MCF 10A (cell line): ENCODE measurements at regions of chr10 and their contacts with region 1.

Region 1: GRCh38 chr10:59625721-59626522 is 83.7 kb downstream of the SLC16A9 start:
- DNase-seq: peak; percentile 66
- H3K4me3 Mint-ChIP-seq: no peak overlapping the region
- H3K27ac Mint-ChIP-seq: no peak overlapping the region
- H3K4me1 Mint-ChIP-seq: peaks cover 5% of the 10 kb centered on the region
- H3K27me3 Mint-ChIP-seq: peaks cover 4% of the 10 kb centered on the region
- CTCF ChIP-seq: peak; percentile 81

Region 2: DNA sequence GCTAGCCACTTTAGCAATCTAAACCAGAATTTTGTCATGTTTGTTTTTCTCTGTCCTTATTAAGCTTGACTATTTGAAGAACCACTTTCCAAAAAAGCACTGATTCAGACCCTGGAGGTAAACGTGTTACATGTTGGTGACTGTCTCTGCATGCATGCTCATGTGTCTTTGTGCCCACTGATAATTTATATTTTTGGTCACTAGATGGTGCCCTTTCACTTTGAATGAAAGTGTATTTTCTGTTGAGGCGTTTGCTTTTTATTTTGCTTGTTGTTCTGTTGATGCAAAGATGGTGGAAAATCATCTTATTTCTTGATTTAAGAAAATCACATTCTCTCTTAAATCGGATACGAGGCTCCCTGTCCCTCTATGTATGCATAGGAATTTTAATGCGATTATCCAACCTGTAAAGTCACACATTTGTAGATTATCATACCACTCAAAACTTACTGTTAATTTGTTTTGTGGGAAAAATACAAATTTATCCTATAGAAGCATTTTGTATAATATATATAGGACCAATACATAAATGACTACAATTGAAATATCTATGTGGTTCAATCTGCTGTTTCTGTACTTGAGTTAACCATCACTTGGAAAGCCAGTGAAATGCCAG is 843.9 kb before region 1 on chr10:
- CTCF ChIA-PET with region 1: interaction called, 15 read pairs
- POLR2A ChIA-PET with region 1: no interaction called
- intact Hi-C with region 1: no loop called
- DNase-seq: peak; percentile 59
- H3K4me3 Mint-ChIP-seq: no peak overlapping the region
- H3K27ac Mint-ChIP-seq: no peak overlapping the region
- H3K4me1 Mint-ChIP-seq: peaks cover 22% of the 10 kb centered on the region
- H3K27me3 Mint-ChIP-seq: no peaks in the 10 kb centered on the region
- CTCF ChIP-seq: peak; percentile 52

Region 3: DNA sequence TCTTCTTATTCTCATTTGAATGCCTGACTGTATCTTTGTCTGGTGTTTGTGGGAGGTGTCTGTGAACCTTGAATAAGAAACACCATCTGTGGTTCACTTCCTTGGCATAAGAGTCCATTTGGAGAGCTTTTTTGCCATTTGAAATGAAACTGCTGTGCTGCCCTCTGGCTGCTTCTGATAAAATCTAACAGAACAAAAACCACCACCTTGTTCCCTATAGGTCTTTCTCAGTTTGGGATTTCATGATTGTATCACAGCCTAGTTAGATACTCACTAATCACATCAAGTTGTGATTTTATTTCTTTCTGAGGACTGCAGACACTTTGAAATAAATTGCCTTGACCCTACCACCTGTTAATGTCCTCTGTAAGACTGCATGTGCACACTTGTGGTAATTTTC is 160.8 kb before region 1 on chr10:
- CTCF ChIA-PET with region 1: interaction called, 10 read pairs
- POLR2A ChIA-PET with region 1: no interaction called
- intact Hi-C with region 1: no loop called
- DNase-seq: peak; percentile 36
- H3K4me3 Mint-ChIP-seq: no peak overlapping the region
- H3K27ac Mint-ChIP-seq: no peak overlapping the region
- H3K4me1 Mint-ChIP-seq: no peaks in the 10 kb centered on the region
- H3K27me3 Mint-ChIP-seq: peaks cover 28% of the 10 kb centered on the region
- CTCF ChIP-seq: no peak

Region 4: DNA sequence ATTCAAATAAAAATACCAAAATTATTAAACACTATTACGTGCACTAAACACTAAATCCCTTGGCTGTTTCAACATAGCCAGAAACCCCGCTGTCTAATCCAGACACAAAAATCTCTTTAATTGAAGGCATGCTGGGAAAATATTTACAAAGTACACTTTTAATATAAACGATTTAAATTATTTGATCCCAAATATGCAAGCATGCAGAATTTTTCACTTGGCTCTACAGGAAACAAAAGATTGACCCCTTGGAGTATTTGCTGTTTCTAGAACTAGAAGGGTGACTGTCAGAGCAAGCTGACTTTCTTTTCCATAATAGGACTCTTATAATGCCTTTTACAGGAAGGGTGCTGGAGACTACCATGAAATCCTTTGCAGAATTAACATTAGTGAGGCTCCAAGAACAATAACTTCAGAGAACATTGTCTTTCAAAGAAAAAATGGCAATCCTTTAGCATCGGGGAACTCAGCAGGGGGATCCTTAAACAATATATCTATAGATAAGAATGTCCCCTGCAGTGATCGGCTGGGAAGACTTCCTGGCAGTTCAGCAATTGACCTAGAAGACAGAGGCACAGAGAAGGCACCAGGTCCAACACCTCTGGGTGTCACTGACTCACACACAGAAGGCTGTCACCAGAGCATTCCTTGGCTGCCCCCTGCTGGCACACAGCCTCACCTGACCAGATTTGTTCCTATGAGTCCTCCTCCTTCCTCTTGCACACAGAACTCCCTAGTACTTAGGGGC is 183.1 kb after region 1 on chr10:
- CTCF ChIA-PET with region 1: interaction called, 67 read pairs
- POLR2A ChIA-PET with region 1: interaction called, 4 read pairs
- intact Hi-C with region 1: loop called (anchors 1 kb)
- DNase-seq: peak; percentile 81
- H3K4me3 Mint-ChIP-seq: no peak overlapping the region
- H3K27ac Mint-ChIP-seq: no peak overlapping the region
- H3K4me1 Mint-ChIP-seq: no peaks in the 10 kb centered on the region
- H3K27me3 Mint-ChIP-seq: no peaks in the 10 kb centered on the region
- CTCF ChIP-seq: peak; percentile 63

Region 5: GRCh38 chr10:59906417-59907202 is 280.7 kb after region 1 on chr10 and contains the start of gene CCDC6:
- CTCF ChIA-PET with region 1: interaction called, 28 read pairs
- POLR2A ChIA-PET with region 1: interaction called, 9 read pairs
- intact Hi-C with region 1: loop called (anchors 1 kb)
- DNase-seq: peak; percentile 92
- H3K4me3 Mint-ChIP-seq: peak within 1 kb of the TSS; percentile 87
- H3K27ac Mint-ChIP-seq: peak within 1 kb of the TSS; percentile 86
- H3K4me1 Mint-ChIP-seq: peaks cover 47% of the 10 kb centered on the region
- H3K27me3 Mint-ChIP-seq: no peaks in the 10 kb centered on the region
- CTCF ChIP-seq: peak; percentile 50
- total RNA-seq, gene CCDC6: 56.6 and 66.4 TPM in 2 replicates

Region 6: DNA sequence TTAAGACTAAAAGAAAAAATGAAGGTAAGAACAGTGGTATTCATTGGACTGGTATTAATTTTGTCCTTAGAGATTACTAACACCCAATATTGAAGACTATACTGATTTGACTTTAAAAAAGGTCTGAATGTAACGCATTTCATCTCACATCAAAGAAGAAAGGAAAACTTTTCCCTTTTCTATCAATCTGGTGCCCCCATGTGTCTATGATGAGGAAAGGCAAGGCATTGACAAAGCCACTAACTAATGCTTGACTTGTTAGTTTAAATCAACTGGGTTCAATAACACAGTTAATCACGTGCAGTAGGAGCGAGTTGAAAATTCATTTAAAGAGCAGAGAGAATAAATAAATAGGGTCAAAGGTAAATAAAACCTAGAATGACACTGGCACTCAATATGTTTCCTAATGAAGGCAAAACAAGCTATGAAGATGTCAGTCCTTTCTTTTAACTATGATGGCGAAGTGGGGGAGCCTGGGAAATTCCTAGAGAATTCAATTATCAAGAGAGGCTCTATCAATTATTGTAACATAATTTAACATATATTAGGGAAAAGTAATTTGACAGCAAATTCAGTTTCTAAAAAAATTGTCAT is 582.9 kb after region 1 on chr10:
- CTCF ChIA-PET with region 1: interaction called, 9 read pairs
- POLR2A ChIA-PET with region 1: interaction called, 3 read pairs
- intact Hi-C with region 1: loop called (anchors 2 kb)
- DNase-seq: peak; percentile 59
- H3K4me3 Mint-ChIP-seq: no peak overlapping the region
- H3K27ac Mint-ChIP-seq: no peak overlapping the region
- H3K4me1 Mint-ChIP-seq: peaks cover 6% of the 10 kb centered on the region
- H3K27me3 Mint-ChIP-seq: no peaks in the 10 kb centered on the region
- CTCF ChIP-seq: peak; percentile 75